ENCODE measurements at regions of chr3 and their contacts with region 1.

Region 1: DNA sequence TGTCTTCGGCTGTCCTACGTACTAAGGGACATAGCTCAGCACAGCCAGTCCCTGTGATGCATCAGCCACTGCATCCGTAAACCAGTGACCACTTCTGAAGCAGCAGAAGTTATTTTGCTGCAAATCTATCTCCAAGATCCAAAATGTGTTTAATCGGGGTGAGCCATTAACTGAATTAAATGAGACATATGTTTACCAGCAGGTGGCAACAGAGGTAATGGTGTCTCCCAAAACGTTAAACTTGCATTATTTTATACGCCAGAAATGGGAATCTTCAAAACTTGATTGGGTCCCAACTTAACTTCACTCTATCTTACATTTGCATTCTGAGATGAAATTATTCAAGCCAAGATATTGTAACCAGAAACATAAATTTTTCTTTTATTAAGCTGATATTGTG is 75.3 kb upstream of the BOC start:
- DNase-seq: no peak
- ATAC-seq: no peak

Region 2: DNA sequence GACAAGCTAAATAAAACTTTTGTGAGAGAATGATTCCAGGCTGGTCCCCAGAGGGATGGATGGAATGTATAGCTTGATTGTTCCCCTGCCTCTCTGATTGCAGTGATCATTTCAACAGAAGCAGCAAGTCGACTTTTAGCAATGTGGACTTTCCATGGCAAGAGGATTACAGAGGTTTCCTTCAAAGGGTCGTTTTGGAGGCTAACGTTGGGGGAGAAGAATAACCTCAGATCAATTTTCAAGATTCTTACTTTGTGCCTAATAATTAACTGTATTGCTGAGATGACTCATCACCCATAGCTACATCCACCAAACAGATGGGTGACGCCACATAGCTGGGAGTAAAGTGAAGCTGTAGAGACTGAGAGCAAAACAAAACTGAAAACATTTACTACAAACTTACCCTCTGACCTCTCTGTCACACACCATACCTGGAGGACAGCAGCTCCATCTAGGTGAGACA is 65.4 kb before region 1 on chr3:
- intact Hi-C with region 1: no loop called
- DNase-seq: no peak
- ATAC-seq: no peak

Region 3: DNA sequence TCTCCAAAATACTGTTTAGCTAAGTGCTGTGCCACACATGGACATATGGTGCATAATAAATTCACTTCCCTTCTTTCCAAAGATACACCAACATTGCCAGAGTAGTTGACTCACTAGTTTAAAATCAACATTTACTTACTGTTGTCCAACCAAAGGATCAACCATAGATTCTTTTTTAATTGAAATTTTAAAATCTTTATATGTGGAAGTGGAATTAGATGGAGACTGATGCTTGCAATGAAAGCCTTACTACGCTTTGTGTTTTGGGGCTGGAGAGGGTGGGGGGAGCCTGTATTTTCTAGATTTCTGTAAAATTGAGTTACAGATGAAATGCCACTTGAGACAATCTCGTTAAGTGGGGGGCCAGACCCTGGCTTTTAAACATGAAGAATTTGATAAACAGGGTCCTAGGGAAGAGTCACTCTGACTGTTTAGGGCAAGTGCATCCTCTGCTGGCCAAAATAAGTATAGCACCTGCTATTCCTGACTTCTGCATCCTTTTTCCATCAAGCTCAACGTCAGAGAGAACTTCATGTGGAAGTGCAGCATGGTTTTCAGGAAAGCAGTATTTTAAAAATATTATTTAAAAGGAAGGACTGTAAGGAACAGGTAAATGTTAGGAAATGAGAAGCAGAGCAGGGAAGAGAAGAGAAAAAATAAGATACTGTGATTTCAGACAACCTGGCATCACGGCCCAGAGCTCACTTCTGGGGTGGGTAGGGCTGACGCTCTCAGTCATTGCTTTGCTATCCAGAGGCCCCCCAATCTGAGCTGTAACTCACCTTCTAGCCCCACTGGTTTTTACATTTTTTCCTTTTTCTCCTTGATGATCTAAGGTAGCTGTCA is 152.0 kb after region 1 on chr3:
- intact Hi-C with region 1: loop called (anchors 2 kb)
- DNase-seq: no peak
- ATAC-seq: peak; percentile 45

Region 4: DNA sequence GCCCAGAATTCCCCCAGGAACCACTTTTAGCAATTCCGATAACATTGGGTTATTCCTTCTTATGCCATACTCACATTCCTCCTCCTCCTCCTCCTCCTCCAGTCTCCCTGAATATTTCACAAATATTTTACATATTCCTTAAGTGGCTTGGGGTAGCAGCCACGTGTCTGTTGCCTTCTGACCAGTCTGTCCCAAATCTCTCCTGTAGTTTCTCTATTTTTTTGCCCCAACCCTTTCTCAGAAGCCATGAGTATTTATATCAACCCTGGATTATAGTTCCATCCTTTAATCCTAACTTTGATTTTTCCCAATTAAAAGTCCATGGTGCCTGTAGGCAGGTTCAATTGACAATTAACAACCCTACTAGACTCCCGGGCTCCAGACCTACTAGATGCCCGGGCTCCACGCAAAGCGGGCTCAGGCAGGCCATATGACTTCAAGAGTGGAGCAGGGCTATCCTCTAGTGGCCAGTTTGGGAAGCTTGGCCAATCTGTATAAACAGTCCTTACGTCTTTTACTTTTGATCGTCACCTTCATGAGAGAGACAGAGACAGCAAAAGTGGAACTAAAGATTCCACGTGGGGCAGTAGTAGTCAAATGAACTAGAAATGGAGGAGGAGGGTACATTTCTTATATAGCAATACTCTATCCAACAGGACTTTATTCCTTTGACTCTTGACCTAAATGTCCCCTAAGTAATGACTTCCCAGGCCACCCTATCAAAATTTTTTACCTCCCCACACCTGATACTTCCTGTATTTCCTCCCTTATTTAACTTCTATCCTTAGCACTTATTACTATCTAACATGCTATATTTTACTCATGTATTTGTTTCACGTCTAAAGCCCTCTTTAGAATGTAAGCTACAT is 490.7 kb after region 1 on chr3:
- intact Hi-C with region 1: loop called (anchors 5 kb)
- DNase-seq: peak; percentile 81
- ATAC-seq: peak; percentile 94